Lower leg skin (tissue), 4 donors: ENCODE measurements at regions of chr12 and their contacts with region 1.

Region 1: GRCh38 chr12:57621497-57622292 is 10.5 kb downstream of the ARHGEF25 start:
- DNase-seq: peak in 1 of 2 donors; percentile 91
- H3K4me3 ChIP-seq: no peak overlapping the region
- CTCF ChIP-seq: peak in 1 of 3 donors; percentile 9
- POLR2A ChIP-seq: no peak

Region 2: DNA sequence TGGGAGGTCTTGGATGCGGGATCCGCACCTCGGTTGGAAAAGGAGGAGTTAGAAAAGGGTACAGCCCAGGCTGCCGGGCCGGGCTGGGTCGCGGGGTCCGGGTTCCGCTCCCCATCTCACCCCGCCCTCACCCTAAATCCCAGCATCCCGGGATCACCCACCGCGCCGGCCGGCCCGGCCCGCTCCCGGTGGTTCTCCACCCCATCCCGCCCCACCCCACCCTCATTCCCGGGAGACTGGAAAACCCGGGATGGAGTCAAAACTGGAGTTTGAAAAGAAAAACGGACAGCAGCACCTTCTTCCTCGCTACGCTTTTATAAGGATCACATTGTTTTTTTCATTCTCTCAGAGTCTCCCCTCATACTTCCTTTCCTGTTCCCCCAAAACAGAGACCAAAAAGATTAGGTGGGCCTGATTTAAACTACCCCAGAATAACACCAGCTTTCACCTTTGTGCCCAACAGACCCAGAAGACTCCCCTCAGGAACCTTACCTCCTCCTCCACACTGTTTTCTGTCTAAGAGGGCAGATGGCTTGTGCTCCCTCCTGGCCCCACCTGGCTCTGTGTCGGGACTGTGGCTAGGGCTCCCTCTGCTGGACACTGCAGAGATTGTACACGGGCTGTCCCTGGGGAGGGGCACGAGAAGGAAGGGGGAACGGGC is 159.3 kb before region 1 on chr12:
- intact Hi-C with region 1: loop called (anchors 10 kb)
- DNase-seq: peak; percentile 76 to 97
- H3K4me3 ChIP-seq: peak overlapping the region; percentile 21
- CTCF ChIP-seq: peak in 1 of 3 donors; percentile 75
- POLR2A ChIP-seq: no peak

Region 3: GRCh38 chr12:57583008-57583831 is 38.5 kb before region 1 on chr12:
- intact Hi-C with region 1: loop called (anchors 5 kb)
- DNase-seq: peak in 1 of 2 donors; percentile 59
- H3K4me3 ChIP-seq: no peak overlapping the region
- CTCF ChIP-seq: peak in 1 of 3 donors; percentile 91
- POLR2A ChIP-seq: no peak